ENCODE measurements at regions of chr12 and their contacts with region 1.

Region 1: DNA sequence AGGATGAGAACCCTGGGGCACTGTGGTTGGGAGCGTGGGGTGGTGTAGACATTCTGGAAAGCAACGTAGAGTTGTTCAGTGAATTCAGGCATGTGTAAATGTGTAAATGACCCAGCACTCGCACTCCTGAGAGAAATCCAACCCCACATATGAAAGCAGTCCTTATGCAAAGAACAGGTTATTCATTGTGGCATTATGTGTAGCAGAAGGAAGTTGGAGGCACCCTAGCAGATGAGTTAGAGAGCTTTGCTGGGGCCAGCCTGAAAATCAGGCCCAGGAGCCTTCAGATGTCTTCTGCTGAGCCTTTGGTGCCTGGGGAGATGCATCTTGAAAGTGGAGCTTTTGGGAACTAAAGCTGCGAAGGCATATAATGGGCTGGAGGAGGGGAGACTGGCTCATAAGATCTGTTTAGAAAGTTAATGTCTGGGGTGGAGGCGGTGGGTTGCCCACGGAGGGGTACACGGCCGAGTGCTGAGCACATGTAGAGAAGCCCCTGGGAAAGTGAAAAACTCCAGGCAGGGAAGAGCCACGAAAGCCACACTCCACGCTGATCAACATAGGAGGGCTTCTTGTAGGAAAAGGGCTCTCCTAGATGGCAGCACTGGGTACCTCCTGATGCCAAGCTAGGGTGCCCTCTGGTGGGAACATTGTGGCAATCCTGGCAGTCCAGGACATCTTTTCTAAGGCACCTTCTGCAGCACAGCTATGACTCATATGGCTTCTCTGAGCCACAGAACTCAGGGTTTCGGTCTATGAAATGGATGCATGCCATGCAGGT is 6.0 kb upstream of the KRT83 start:
- DNase-seq: peak; percentile 96
- ATAC-seq: peak; percentile 99
- H3K4me3 ChIP-seq: no peak overlapping the region; a peak in 1 of 4 replicates
- H3K27ac ChIP-seq: no peak overlapping the region
- H3K4me1 ChIP-seq: peaks cover 0 to 15% of the 10 kb centered on the region in 2 experiments; a peak in 2 of 4 replicates
- H3K27me3 ChIP-seq: no peaks in the 10 kb centered on the region; the same call in 1 of the 2 replicates
- CTCF ChIP-seq: peak; percentile 97 to 100 (median 99)
- POLR2A ChIP-seq: no peak
- RAD21 ChIP-seq: peak; percentile 97

Region 2: DNA sequence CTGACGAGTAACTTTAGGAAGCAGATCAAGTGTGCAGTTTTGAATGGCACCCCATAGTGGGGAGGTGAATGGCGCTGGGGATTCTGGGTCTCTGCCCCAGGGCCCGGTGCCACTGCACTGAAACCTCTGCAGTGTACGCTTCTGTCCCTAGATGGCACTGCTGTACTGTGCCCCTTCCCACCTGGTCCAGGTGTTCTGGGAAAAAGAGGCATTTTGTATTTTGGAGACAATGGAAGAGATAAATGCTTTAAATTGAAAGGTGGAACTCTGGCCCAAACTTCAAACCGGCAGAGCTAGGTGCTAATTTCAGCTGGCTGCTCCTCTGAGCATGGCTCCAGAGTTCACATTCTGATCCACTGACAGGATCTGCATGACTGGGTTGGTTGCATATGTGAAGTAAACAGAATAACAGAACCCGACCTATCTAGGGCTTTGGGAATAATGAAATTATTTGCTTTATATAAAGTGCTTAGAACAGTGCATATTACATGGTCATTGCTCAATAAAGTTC is 187.6 kb before region 1 on chr12:
- CTCF ChIA-PET with region 1: interaction called, 18 read pairs
- POLR2A ChIA-PET with region 1: no interaction called
- RAD21 ChIA-PET with region 1: interaction called, 3 to 5 read pairs
- intact Hi-C with region 1: loop called (anchors 1 kb)
- DNase-seq: no peak
- ATAC-seq: peak; percentile 73
- H3K4me3 ChIP-seq: no peak overlapping the region
- H3K27ac ChIP-seq: no peak overlapping the region
- H3K4me1 ChIP-seq: peaks cover 19 to 43% of the 10 kb centered on the region in 2 experiments
- H3K27me3 ChIP-seq: no peaks in the 10 kb centered on the region
- CTCF ChIP-seq: peak in 2 of 3 experiments; percentile 96 to 98; a peak in 4 of 6 replicates
- POLR2A ChIP-seq: no peak
- RAD21 ChIP-seq: no peak

Region 3: GRCh38 chr12:52156736-52157565 is 170.3 kb before region 1 on chr12:
- CTCF ChIA-PET with region 1: interaction called, 20 read pairs
- POLR2A ChIA-PET with region 1: interaction called, 3 read pairs
- RAD21 ChIA-PET with region 1: interaction called in 1 of 2 experiments, 4 read pairs
- intact Hi-C with region 1: loop called (anchors 2 kb)
- DNase-seq: no peak
- ATAC-seq: peak; percentile 67
- H3K4me3 ChIP-seq: no peak overlapping the region
- H3K27ac ChIP-seq: no peak overlapping the region
- H3K4me1 ChIP-seq: peaks cover 27 to 64% of the 10 kb centered on the region in 2 experiments
- H3K27me3 ChIP-seq: no peaks in the 10 kb centered on the region
- CTCF ChIP-seq: peak in 2 of 3 experiments; percentile 95 to 98; a peak in 4 of 6 replicates
- POLR2A ChIP-seq: no peak
- RAD21 ChIP-seq: no peak

Region 4: DNA sequence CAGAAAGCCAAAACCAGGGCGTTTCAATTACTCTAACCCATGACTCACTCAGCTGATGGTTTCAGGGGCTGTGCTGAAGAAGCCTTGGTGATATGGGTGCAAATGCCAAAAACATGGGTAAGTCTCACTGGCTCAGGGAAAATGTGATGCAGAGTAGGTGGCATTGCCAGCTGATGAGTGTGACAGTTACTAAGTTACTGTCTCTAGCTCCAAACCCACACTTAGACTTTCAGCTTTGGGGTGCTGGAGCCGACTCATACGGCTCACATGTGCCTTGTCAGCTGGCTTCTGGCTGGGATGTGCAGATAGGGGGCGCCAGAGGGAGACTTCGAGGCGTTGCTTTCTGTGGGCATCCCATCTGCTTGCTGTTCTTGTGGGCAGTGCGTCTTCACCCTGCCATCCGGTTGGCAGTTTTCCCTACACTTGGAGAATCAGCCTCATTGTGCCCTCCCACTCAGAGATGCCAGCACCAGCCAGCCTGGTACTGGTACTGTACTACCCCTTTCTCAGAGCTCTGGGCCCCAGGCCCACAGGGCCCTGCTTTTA is 105.3 kb before region 1 on chr12:
- CTCF ChIA-PET with region 1: interaction called, 13 read pairs
- POLR2A ChIA-PET with region 1: interaction called, 3 read pairs
- RAD21 ChIA-PET with region 1: interaction called in 1 of 2 experiments, 5 read pairs
- intact Hi-C with region 1: loop called (anchors 2 kb)
- DNase-seq: peak; percentile 67
- ATAC-seq: peak; percentile 83
- H3K4me3 ChIP-seq: peak overlapping the region in 1 of 2 experiments; percentile 15; a peak in 1 of 4 replicates
- H3K27ac ChIP-seq: no peak overlapping the region
- H3K4me1 ChIP-seq: peaks cover 26 to 86% of the 10 kb centered on the region in 2 experiments
- H3K27me3 ChIP-seq: no peaks in the 10 kb centered on the region
- CTCF ChIP-seq: peak in 2 of 3 experiments; percentile 86 to 91; a peak in 4 of 6 replicates
- POLR2A ChIP-seq: no peak
- RAD21 ChIP-seq: no peak

Region 5: GRCh38 chr12:52307836-52308805 is 19.1 kb before region 1 on chr12:
- CTCF ChIA-PET with region 1: interaction called, 17 read pairs
- POLR2A ChIA-PET with region 1: no interaction called
- RAD21 ChIA-PET with region 1: interaction called in 1 of 2 experiments, 4 read pairs
- intact Hi-C with region 1: no loop called
- DNase-seq: peak; percentile 24
- ATAC-seq: peak; percentile 96
- H3K4me3 ChIP-seq: peak overlapping the region; percentile 40 to 58
- H3K27ac ChIP-seq: peak overlapping the region; percentile 3; the same call in 1 of the 2 replicates
- H3K4me1 ChIP-seq: peaks cover 10 to 32% of the 10 kb centered on the region in 2 experiments
- H3K27me3 ChIP-seq: no peaks in the 10 kb centered on the region
- CTCF ChIP-seq: peak in 1 of 3 experiments; percentile 14; a peak in 1 of 6 replicates
- POLR2A ChIP-seq: no peak
- RAD21 ChIP-seq: no peak

Region 6: GRCh38 chr12:52870351-52871290 is 543.4 kb after region 1 on chr12:
- CTCF ChIA-PET with region 1: interaction called, 6 read pairs
- POLR2A ChIA-PET with region 1: no interaction called
- RAD21 ChIA-PET with region 1: no interaction called
- intact Hi-C with region 1: loop called (anchors 5 kb)
- DNase-seq: no peak
- ATAC-seq: peak; percentile 71
- H3K4me3 ChIP-seq: 0 out of 4 replicates have a peak overlapping the region, but pooled peaks of 1 of the 2 experiments have one; percentile 16
- H3K27ac ChIP-seq: peak overlapping the region; percentile 81
- H3K4me1 ChIP-seq: peaks cover 48 to 64% of the 10 kb centered on the region in 2 experiments
- H3K27me3 ChIP-seq: no peaks in the 10 kb centered on the region
- CTCF ChIP-seq: peak in 2 of 3 experiments; percentile 89 to 96; a peak in 4 of 6 replicates
- POLR2A ChIP-seq: no peak
- RAD21 ChIP-seq: no peak

Measured in HCT116 (cell line).